Activated T-helper 1 cell treated with anti-CD3 and anti-CD28 coated beads, Interleukin-12 subunit alpha, Interleukin-12 subunit beta, Interleukin-2, Interleukin-4 antibody, amounts not matched to agents 30 ng/mL and 10 ng/mL and 1 ng/mL, durations not matched to agents 14 hours and 24 hours and 36 hours (primary cell): ENCODE measurements at regions of chr17 and their contacts with region 1.

Region 1: GRCh38 chr17:55513885-55514591 is 2.8 kb upstream of the SMIM36 start:
- DNase-seq: peak; percentile 56
- H3K4me3 Mint-ChIP-seq: no peak overlapping the region
- H3K27ac Mint-ChIP-seq: no peak overlapping the region
- H3K4me1 Mint-ChIP-seq: peaks cover 4% of the 10 kb centered on the region
- H3K27me3 Mint-ChIP-seq: peaks cover 9% of the 10 kb centered on the region

Region 2: GRCh38 chr17:55356434-55357328 is 157.4 kb before region 1 on chr17:
- intact Hi-C with region 1: loop called (anchors 1 kb)
- DNase-seq: peak; percentile 51
- H3K4me3 Mint-ChIP-seq: no peak overlapping the region
- H3K27ac Mint-ChIP-seq: no peak overlapping the region
- H3K4me1 Mint-ChIP-seq: no peaks in the 10 kb centered on the region
- H3K27me3 Mint-ChIP-seq: peaks cover 21% of the 10 kb centered on the region

Region 3: DNA sequence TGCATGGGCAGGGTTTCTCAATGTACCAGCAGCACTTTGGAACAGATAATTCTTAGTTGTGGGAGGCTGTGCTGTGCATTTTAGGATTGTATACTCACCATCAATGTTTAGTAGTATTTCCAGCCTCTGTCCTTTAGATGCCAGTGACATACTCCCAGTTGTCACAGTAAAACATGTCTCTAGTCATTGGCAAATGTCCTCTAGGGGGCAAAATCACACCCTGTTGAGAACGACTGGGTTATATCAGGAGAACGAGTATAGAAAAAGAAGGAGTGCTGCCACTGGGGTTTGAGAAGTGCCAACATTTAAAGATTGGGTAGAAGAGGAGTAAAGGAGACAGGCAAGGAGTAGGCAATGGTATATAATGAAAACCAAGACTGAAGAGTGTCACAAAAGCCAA is 35.1 kb after region 1 on chr17:
- intact Hi-C with region 1: no loop called
- DNase-seq: no peak
- H3K4me3 Mint-ChIP-seq: no peak overlapping the region
- H3K27ac Mint-ChIP-seq: no peak overlapping the region
- H3K4me1 Mint-ChIP-seq: peaks cover 6% of the 10 kb centered on the region
- H3K27me3 Mint-ChIP-seq: peaks cover 16% of the 10 kb centered on the region

Region 4: DNA sequence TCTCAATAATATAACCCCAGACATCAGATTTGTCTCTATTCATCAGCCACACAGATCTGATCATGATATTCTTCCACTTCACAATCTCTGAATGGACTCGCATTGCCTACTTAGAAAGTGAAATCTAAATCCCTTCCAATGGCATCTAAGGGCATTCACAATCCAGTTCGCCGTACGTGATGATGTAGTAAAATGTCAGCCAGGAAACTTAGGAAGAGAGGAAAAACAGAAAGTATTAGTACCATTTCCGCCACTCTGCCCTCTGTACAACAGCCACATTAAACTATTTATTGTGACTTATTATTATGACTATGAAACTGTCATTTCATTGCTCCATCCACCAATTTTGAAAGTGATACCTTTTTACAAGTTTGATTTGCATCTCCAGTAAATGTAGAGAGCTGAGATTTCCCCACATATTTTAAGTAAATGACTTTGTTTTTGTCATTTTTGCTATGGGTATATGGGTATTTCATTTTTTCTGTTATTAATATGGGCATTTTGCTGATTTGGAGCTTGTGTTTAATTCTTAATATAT is 66.6 kb after region 1 on chr17:
- intact Hi-C with region 1: no loop called
- DNase-seq: no peak
- H3K4me3 Mint-ChIP-seq: no peak overlapping the region
- H3K27ac Mint-ChIP-seq: no peak overlapping the region
- H3K4me1 Mint-ChIP-seq: peaks cover 5% of the 10 kb centered on the region
- H3K27me3 Mint-ChIP-seq: peaks cover 7% of the 10 kb centered on the region